Endothelial cell of umbilical vein (primary cell): ENCODE measurements at regions of chr5 and their contacts with region 1.

Region 1: DNA sequence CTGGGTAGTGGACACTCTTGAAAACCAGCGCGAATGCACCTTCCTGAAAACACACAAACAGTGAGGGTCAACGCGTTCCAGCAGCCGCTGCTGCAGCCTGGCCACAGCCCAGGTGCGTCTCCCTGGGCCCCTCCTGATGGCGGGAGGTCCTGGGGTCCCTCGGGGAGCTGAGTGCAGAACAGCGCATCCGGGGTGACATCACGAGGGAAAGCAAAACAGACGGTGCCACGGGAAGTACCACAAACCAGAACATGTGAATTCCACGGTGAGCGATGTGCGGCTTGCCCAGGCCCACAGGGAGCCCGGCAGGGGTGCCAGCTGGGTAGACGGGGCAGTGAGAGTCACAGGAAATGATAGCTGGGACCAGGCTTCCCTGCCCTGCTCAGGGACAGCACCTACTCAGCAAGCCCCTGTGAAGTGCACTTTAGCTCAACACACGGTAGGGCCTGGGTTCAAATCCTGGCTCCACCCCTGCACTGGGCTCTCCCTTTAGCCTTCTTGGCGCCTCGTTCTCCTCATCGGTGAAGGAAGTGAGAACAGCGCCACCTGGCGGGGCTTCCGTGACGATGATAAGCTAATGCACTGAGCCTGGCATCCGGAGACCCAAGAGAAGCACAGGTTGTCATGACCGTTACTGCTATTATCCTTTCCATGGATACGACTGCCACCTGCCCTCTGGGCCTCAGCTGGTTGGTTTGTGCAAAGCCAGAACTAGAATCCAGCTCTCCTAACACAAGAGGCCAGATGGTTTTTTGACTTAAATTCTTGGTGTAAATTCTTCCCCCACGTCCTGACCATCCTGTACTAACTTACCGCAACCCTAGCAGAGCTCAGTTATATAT is 24.6 kb downstream of the GFPT2 start:
- DNase-seq: peak; percentile 56
- H3K4me3 ChIP-seq: no peak overlapping the region
- H3K27ac ChIP-seq: no peak overlapping the region
- H3K4me1 ChIP-seq: peaks cover 7% of the 10 kb centered on the region
- H3K27me3 ChIP-seq: no peaks in the 10 kb centered on the region
- CTCF ChIP-seq: peak; percentile 74 to 83
- POLR2A ChIP-seq: no peak

Region 2: GRCh38 chr5:179643556-179643955 is 685.0 kb before region 1 on chr5:
- CTCF ChIA-PET with region 1: no interaction called
- POLR2A ChIA-PET with region 1: no interaction called
- dilution Hi-C with region 1: no loop called
- intact Hi-C with region 1: no loop called
- DNase-seq: no peak
- H3K4me3 ChIP-seq: no peak overlapping the region
- H3K27ac ChIP-seq: no peak overlapping the region
- H3K4me1 ChIP-seq: no peaks in the 10 kb centered on the region
- H3K27me3 ChIP-seq: no peaks in the 10 kb centered on the region
- CTCF ChIP-seq: no peak
- POLR2A ChIP-seq: no peak

Region 3: GRCh38 chr5:180126726-180127681 is 201.5 kb before region 1 on chr5:
- CTCF ChIA-PET with region 1: interaction called, 17 read pairs
- POLR2A ChIA-PET with region 1: no interaction called
- dilution Hi-C with region 1: no loop called
- intact Hi-C with region 1: loop called (anchors 1 kb)
- DNase-seq: no peak
- H3K4me3 ChIP-seq: no peak overlapping the region
- H3K27ac ChIP-seq: no peak overlapping the region
- H3K4me1 ChIP-seq: no peaks in the 10 kb centered on the region
- H3K27me3 ChIP-seq: peaks cover 0 to 2% of the 10 kb centered on the region in 2 experiments
- CTCF ChIP-seq: peak; percentile 70 to 84
- POLR2A ChIP-seq: no peak

Region 4: DNA sequence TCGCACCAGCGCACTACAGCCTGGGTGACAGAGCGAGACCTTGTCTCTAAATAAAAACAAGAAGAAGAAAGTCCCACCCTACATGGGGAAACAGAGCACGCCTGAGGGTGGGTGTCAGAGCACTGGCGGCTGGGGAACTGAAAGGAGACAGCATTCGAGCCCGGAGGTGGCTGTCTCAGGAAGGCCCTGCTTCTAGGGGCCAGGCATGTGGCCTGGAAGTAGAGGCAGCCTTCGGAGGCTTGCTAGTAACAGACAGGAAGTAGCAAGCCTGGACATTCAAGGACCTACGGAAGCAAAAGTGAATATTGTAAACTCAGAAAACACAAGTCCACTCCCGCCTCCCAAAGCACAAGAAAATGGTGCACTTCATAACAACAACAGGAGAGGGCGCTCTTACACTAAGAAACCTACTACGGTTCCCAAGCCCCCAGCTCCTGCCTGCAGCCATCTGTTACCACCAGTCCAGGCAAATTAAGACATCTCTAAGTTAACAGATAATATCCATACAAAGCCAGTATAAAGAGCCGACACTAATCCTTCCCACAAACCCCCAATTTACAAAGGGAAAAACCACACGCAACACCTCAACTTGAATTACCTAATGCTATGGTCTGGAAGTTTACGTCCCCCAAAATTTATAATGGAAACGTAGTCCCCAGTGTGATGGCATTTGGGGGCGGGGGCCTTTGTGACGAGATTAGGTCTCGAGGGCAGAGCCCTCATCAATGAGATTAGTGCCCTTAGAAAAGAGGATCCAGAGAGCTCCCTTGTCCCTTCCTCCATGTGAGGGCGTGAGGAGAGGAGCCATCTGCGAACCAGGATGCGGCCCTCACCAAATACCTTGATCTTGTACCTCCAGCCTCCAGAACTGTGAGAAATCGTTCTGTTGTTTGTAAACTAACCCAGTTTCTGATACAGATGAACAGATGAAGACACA is 127.2 kb before region 1 on chr5:
- CTCF ChIA-PET with region 1: interaction called, 28 read pairs
- POLR2A ChIA-PET with region 1: no interaction called
- dilution Hi-C with region 1: no loop called
- intact Hi-C with region 1: loop called (anchors 2 kb)
- DNase-seq: peak; percentile 40
- H3K4me3 ChIP-seq: no peak overlapping the region
- H3K27ac ChIP-seq: no peak overlapping the region
- H3K4me1 ChIP-seq: no peaks in the 10 kb centered on the region
- H3K27me3 ChIP-seq: no peaks in the 10 kb centered on the region
- CTCF ChIP-seq: peak; percentile 26 to 35
- POLR2A ChIP-seq: no peak

Region 5: GRCh38 chr5:180209137-180209581 is 119.4 kb before region 1 on chr5 and contains the start of gene RASGEF1C:
- CTCF ChIA-PET with region 1: interaction called, 18 read pairs
- POLR2A ChIA-PET with region 1: no interaction called
- dilution Hi-C with region 1: no loop called
- intact Hi-C with region 1: loop called (anchors 2 kb)
- DNase-seq: peak; percentile 40
- H3K4me3 ChIP-seq: peak within 1 kb of the TSS in 1 of 3 experiments; percentile 27
- H3K27ac ChIP-seq: no peak within 1 kb of the TSS
- H3K4me1 ChIP-seq: peaks cover 3% of the 10 kb centered on the region
- H3K27me3 ChIP-seq: peaks cover 10 to 21% of the 10 kb centered on the region in 2 experiments
- CTCF ChIP-seq: peak; percentile 36 to 46
- POLR2A ChIP-seq: no peak
- total RNA-seq, gene RASGEF1C: not detected in 2 replicates

Region 6: DNA sequence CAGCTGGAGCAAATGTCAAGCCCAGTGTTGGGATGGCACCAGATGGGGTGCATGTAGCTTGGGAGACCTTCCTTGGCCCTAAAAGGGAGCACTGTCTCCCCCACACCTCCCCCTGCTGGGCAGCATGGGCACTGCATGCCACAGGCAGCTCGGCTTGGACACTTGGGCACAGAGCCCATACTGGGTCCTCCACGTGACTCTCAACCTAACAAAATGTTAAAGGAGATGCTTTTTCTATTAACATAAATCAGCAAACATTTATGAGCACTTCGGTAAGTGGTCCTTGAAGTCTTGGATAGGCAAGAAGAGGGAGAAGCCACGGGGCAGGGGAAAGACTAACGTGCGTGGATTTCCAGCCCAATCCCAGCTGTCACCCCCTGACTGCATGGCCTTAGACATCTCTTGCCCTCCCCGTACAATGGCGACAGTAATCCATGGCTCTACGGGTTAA is 12.7 kb before region 1 on chr5:
- CTCF ChIA-PET with region 1: interaction called, 49 read pairs
- POLR2A ChIA-PET with region 1: no interaction called
- dilution Hi-C with region 1: no loop called
- intact Hi-C with region 1: no loop called
- DNase-seq: peak; percentile 58
- H3K4me3 ChIP-seq: no peak overlapping the region
- H3K27ac ChIP-seq: no peak overlapping the region
- H3K4me1 ChIP-seq: peaks cover 2% of the 10 kb centered on the region
- H3K27me3 ChIP-seq: no peaks in the 10 kb centered on the region
- CTCF ChIP-seq: peak; percentile 96 to 98
- POLR2A ChIP-seq: no peak

Region 7: GRCh38 chr5:180343831-180344327 is 15.4 kb after region 1 on chr5:
- CTCF ChIA-PET with region 1: interaction called, 37 read pairs
- POLR2A ChIA-PET with region 1: no interaction called
- dilution Hi-C with region 1: no loop called
- intact Hi-C with region 1: no loop called
- DNase-seq: no peak
- H3K4me3 ChIP-seq: no peak overlapping the region
- H3K27ac ChIP-seq: no peak overlapping the region
- H3K4me1 ChIP-seq: no peaks in the 10 kb centered on the region
- H3K27me3 ChIP-seq: peaks cover 0 to 2% of the 10 kb centered on the region in 2 experiments
- CTCF ChIP-seq: no peak
- POLR2A ChIP-seq: no peak

Region 8: DNA sequence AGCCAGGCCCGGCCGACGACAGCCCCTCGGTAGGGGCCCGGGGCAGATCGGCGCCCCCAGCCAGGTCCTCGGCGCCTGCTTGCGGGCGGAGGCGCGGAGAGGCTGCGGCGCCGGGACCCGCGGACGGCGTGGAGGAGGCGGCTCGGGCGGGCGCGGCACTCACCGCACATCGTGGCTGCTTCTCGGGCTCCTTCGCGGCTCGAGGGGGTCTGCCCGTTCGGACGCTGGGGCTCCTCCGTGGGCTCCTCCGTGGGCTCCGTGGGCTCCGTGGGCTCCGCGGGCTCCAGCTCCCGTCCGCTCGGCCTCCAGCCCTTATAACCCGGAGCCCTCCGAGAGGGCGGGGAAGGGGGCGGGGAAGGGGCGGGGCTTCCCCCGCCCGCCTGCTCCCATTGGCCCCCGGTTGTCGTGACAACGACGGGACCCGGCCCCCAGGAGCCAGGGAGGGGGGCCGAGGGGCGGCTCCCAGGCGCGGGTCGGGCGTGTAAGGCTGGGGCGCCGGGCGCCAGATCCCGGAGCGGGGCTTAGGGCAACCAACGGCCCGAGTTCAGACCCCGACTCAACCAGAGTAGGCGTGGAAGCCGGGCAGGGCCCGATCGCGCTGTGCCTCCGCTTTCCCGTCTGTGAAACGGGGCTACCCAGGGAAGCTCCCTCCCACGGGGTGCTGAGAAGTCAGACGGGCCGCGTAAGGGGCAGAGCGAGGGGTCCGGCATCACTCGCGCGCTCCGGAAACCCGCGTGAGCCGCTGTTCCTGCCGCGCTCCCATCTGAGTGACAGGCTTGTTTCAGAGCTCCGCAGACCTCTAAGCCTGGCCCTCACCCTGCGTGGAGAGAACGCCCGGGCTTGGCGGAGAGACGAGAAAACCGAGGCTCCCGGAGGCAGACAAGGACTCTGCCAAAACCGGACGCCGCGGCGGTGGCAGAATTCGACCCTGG is 24.8 kb after region 1 on chr5 and contains the start of gene GFPT2:
- CTCF ChIA-PET with region 1: interaction called, 25 read pairs
- POLR2A ChIA-PET with region 1: no interaction called
- dilution Hi-C with region 1: no loop called
- intact Hi-C with region 1: no loop called
- DNase-seq: peak; percentile 65
- H3K4me3 ChIP-seq: peak within 1 kb of the TSS; percentile 56 to 74 (median 70)
- H3K27ac ChIP-seq: peak within 1 kb of the TSS; percentile 34
- H3K4me1 ChIP-seq: peaks cover 8% of the 10 kb centered on the region
- H3K27me3 ChIP-seq: peaks cover 7 to 30% of the 10 kb centered on the region in 2 experiments
- CTCF ChIP-seq: no peak
- POLR2A ChIP-seq: no peak
- total RNA-seq, gene GFPT2: 4.5 and 5.5 TPM in 2 replicates

Region 9: GRCh38 chr5:180433032-180433422 is 104.5 kb after region 1 on chr5:
- CTCF ChIA-PET with region 1: no interaction called
- POLR2A ChIA-PET with region 1: no interaction called
- dilution Hi-C with region 1: no loop called
- intact Hi-C with region 1: no loop called
- DNase-seq: no peak
- H3K4me3 ChIP-seq: no peak overlapping the region
- H3K27ac ChIP-seq: no peak overlapping the region
- H3K4me1 ChIP-seq: no peaks in the 10 kb centered on the region
- H3K27me3 ChIP-seq: no peaks in the 10 kb centered on the region
- CTCF ChIP-seq: no peak
- POLR2A ChIP-seq: no peak